Dendritic cell treated with granulocyte-macrophage colony-stimulating factor and Interleukin-4, amounts not matched to agents 40 ng/mL and 50 ng/mL, for 4 days (primary cell): ENCODE measurements at regions of chr17 and their contacts with region 1.

Region 1: DNA sequence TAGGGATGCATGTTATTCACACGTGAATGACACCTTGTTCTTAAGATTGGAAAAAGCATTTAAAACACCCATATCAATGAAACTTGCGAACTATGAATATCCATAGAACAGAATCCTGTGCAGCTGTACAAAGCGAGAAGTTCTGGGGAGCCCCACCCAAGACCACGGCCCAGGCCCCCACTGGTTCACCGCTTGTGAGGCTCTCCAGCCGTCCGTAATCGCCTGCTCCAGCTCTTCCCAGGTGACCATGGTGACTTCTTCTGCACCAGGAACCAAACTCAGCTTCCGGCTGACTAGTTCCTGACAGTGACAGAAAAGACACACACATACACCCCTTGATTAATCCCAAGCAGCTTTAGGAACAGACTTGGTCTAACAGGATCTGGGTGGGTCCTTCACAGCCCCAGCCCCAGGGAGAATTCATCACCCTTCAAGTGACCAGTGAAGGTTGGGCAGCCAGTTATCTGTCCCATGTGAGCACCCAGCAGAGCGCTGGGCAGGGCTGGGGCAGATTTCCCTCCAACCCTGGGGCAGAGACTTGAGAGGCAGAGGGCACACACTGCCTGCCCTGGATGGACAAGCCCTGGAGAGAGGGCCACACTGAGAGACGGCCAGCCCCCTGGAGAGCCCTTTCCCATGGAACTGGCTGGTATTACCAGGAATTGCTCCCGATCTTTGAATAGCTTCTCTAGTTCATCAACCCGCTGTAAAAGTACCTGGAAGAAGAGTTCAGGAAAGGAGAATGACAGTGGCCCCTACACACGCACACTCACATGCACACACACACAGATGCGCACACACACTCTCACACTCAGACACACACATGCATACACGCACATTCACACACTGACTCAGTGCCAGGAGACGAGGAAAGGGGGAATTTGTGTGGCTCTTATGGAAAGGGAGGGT is 3.6 kb downstream of the QRICH2 start:
- H3K4me3 Mint-ChIP-seq: no peak overlapping the region
- H3K27ac Mint-ChIP-seq: no peak overlapping the region
- H3K4me1 Mint-ChIP-seq: no peaks in the 10 kb centered on the region
- H3K27me3 Mint-ChIP-seq: peaks cover 1% of the 10 kb centered on the region

Region 2: GRCh38 chr17:75614006-75614405 is 690.5 kb before region 1 on chr17:
- intact Hi-C with region 1: no loop called
- H3K4me3 Mint-ChIP-seq: no peak overlapping the region
- H3K27ac Mint-ChIP-seq: no peak overlapping the region
- H3K4me1 Mint-ChIP-seq: no peaks in the 10 kb centered on the region
- H3K27me3 Mint-ChIP-seq: no peaks in the 10 kb centered on the region

Region 3: DNA sequence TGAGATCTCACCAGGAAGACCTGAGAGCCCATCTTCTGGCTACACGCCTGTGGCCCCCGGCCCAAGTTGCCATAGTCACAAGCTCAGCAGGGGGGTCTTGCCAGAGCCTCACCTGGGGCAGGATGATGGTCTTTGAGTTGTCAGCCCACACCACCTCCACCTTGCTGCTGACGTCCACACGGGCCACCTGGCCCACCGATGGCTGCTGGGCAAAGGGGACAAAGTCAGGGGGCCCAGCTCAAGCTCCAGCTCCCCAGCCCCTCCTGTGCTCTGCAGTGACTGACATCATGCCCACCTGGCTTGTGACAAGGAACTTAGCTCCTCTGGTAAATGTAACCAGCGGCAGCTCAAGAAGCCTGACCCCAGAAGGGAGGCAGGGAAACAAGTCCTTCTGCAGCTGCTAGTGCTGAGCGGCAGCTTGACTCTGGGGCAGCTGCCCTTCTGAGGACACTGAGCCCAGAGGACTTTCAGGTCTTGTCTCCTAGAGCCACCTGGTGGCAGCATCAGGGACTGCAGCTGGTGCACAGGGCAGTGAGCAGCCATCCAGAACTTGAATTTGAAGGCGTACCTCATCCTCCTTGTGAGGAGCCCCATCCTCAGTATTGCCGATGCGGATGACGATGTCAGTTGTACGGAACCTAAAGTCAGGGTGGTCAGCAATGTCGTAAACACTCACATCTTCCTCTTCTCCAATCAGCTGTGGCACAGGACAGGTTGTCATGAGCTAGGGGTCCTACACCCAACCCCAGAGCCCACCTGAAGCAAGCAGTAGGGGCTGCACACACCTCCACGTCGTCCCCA is 93.4 kb after region 1 on chr17:
- intact Hi-C with region 1: loop called (anchors 1 kb)
- H3K4me3 Mint-ChIP-seq: no peak overlapping the region
- H3K27ac Mint-ChIP-seq: no peak overlapping the region
- H3K4me1 Mint-ChIP-seq: peaks cover 11% of the 10 kb centered on the region
- H3K27me3 Mint-ChIP-seq: no peaks in the 10 kb centered on the region